ENCODE measurements at regions of chr1 and their contacts with region 1.

Region 1: DNA sequence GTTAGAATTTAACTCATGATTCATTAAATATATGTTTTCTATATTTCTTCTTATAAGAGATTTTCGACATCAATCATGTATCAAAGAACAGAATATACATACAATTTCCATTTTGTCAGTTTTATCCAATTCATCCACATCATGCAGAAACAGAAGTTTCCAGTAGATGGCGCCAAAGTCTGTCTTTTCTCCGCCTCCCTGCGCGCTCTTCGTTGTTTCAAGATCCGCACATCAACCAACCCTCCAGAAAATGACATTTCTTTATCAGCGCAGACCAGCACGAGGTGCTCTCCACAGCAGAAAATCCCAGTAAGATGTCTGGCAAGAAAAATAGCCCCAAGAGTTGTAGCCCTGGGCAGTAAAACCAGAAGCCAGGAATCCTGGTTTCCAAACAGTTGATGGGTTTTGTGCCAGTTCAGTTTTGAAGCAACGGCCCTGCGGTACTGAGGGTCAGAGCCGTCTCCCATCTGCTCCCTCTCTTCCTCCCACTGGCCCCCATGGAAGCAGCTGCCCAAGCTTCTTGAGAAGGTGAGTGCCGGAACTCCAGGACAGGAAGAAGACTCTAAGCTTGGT is 38.6 kb upstream of the GPR137B start:
- DNase-seq: peak in 1 of 3 donors; percentile 71
- ATAC-seq: peak; percentile 71
- H3K4me3 ChIP-seq: no peak overlapping the region
- H3K4me1 ChIP-seq: no peaks in the 10 kb centered on the region
- CTCF ChIP-seq: peak; percentile 62

Region 2: GRCh38 chr1:236332092-236332758 is 228.5 kb after region 1 on chr1:
- intact Hi-C with region 1: no loop called
- DNase-seq: no peak
- ATAC-seq: peak; percentile 29
- H3K4me3 ChIP-seq: no peak overlapping the region
- H3K4me1 ChIP-seq: no peaks in the 10 kb centered on the region
- CTCF ChIP-seq: no peak

Region 3: DNA sequence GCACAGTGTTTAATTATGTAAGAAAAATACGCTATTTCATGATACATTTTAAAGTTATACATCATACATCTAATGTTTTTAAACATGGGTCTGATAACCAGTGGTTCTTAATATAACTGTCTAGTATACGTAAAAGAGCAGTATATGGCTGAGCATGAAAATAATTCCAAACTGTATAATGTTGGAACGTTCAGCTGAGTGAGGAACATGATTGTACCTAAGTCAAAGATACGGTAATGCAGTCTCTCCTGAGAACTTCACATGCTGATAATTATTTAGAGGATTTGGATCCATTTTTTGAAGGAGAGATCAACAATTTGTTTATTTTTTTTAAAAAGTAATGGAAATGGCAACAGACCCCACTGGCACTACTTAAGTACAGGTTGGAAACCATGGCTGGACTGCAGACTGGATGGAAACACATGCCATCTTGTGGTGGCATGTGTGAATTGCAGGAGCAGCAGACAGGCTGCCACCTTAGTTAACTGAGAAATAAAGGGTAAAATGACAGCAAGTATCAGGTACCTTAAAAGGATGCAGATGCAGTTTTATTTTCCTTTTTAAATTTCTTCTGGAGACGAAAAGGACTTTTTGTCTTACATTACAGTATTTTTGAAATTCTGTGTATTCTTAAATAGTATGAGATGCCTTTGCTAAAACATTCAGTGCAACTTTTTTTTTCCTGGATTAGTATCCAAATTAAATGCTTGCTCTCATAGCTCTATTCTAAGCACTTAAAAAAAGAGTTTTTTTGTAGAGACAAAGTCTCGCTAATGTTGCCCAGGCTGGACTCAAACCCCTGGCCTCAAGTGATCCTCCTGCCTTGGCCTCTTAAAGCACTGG is 765.1 kb after region 1 on chr1:
- intact Hi-C with region 1: loop called in 1 of 2 experiments (anchors 10 kb)
- DNase-seq: peak in 1 of 3 donors; percentile 60
- ATAC-seq: peak; percentile 84
- H3K4me3 ChIP-seq: no peak overlapping the region
- H3K4me1 ChIP-seq: no peaks in the 10 kb centered on the region
- CTCF ChIP-seq: peak; percentile 86